Endothelial cell of umbilical vein (primary cell): ENCODE measurements at regions of chr17 and their contacts with region 1.

Region 1: DNA sequence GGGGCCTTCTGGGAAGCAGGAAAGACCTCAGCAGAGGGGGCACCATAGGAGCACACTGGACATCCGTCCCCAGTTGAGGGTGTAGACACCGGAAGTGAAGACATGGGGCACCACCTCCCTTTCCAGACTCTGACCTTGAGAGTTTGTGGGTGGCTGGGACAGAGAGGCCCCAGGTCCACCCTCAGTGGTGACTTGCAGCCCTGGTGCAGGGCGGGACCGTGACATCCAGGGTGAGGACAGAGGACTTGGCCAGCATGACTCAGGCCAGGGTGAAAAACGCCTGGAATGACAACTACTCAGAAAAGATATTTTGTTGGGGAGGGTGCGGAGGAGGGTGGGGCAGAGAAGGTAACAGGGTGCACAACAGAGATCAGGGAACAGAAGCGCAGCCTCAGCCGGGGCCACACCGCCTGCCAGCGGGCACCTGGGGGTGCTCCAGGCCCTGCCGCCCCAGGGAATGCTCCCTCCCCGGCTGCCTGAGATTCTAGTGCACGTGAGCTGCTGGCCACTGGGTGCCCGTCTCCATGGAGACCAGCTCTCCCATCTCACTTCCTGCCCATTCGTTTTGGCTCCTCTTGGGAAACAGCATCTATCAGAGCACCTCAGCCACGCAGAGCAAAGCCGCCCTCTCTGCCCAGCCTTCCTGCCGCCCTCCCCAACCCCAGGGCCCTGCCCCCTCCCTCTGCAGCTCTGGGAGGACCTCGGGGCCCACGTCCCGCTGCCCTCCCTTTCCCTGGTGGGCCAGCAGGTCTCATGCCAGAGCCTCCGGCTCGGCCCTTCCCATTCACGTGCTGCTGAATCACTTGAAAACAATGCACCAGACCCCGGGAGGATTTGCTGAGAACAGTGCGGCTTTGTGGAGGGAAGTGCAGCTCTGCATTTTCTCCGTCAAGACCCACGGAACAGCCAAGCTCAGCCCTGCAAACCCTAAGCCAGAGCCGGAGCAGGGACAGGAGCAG is 19.6 kb downstream of the CEP295NL start:
- DNase-seq: peak; percentile 97
- H3K4me3 ChIP-seq: no peak overlapping the region
- H3K27ac ChIP-seq: peak overlapping the region; percentile 85
- H3K4me1 ChIP-seq: peaks cover 42% of the 10 kb centered on the region
- H3K27me3 ChIP-seq: no peaks in the 10 kb centered on the region
- CTCF ChIP-seq: no peak
- POLR2A ChIP-seq: no peak

Region 2: GRCh38 chr17:78840725-78841611 is 42.5 kb before region 1 on chr17 and contains the start of gene USP36:
- CTCF ChIA-PET with region 1: no interaction called
- POLR2A ChIA-PET with region 1: no interaction called
- dilution Hi-C with region 1: no loop called
- intact Hi-C with region 1: loop called (anchors 1 kb)
- DNase-seq: peak; percentile 99
- H3K4me3 ChIP-seq: peak within 1 kb of the TSS; percentile 64 to 72 (median 68)
- H3K27ac ChIP-seq: peak within 1 kb of the TSS; percentile 81
- H3K4me1 ChIP-seq: peaks cover 16% of the 10 kb centered on the region
- H3K27me3 ChIP-seq: no peaks in the 10 kb centered on the region
- CTCF ChIP-seq: no peak
- POLR2A ChIP-seq: peak; percentile 56
- total RNA-seq, gene USP36: 46.6 and 49.8 TPM in 2 replicates

Region 3: GRCh38 chr17:78925234-78925633 is 41.8 kb after region 1 on chr17 and contains the start of gene TIMP2:
- CTCF ChIA-PET with region 1: no interaction called
- POLR2A ChIA-PET with region 1: no interaction called
- dilution Hi-C with region 1: no loop called
- intact Hi-C with region 1: loop called (anchors 1 kb)
- DNase-seq: peak; percentile 86
- H3K4me3 ChIP-seq: peak within 1 kb of the TSS; percentile 54 to 78 (median 59)
- H3K27ac ChIP-seq: peak within 1 kb of the TSS; percentile 64
- H3K4me1 ChIP-seq: peaks cover 13% of the 10 kb centered on the region
- H3K27me3 ChIP-seq: no peaks in the 10 kb centered on the region
- CTCF ChIP-seq: peak in 1 of 2 donors; percentile 20
- POLR2A ChIP-seq: peak; percentile 83
- total RNA-seq, gene TIMP2: 280 and 318 TPM in 2 replicates

Region 4: GRCh38 chr17:78933959-78934568 is 50.6 kb after region 1 on chr17:
- CTCF ChIA-PET with region 1: no interaction called
- POLR2A ChIA-PET with region 1: interaction called, 4 read pairs
- dilution Hi-C with region 1: no loop called
- intact Hi-C with region 1: loop called (anchors 1 kb)
- DNase-seq: peak; percentile 96
- H3K4me3 ChIP-seq: peak overlapping the region in 2 of 3 experiments; percentile 16 to 25
- H3K27ac ChIP-seq: peak overlapping the region; percentile 93
- H3K4me1 ChIP-seq: peaks cover 30% of the 10 kb centered on the region
- H3K27me3 ChIP-seq: no peaks in the 10 kb centered on the region
- CTCF ChIP-seq: no peak
- POLR2A ChIP-seq: peak; percentile 55

Region 5: GRCh38 chr17:79019632-79020584 is 136.5 kb after region 1 on chr17:
- CTCF ChIA-PET with region 1: no interaction called
- POLR2A ChIA-PET with region 1: no interaction called
- dilution Hi-C with region 1: no loop called
- intact Hi-C with region 1: no loop called
- DNase-seq: peak; percentile 67
- H3K4me3 ChIP-seq: no peak overlapping the region
- H3K27ac ChIP-seq: no peak overlapping the region
- H3K4me1 ChIP-seq: peaks cover 7% of the 10 kb centered on the region
- H3K27me3 ChIP-seq: peaks cover 0 to 10% of the 10 kb centered on the region in 2 experiments
- CTCF ChIP-seq: peak; percentile 59 to 63
- POLR2A ChIP-seq: no peak